ENCODE measurements at regions of chr20 and their contacts with region 1.

Region 1: DNA sequence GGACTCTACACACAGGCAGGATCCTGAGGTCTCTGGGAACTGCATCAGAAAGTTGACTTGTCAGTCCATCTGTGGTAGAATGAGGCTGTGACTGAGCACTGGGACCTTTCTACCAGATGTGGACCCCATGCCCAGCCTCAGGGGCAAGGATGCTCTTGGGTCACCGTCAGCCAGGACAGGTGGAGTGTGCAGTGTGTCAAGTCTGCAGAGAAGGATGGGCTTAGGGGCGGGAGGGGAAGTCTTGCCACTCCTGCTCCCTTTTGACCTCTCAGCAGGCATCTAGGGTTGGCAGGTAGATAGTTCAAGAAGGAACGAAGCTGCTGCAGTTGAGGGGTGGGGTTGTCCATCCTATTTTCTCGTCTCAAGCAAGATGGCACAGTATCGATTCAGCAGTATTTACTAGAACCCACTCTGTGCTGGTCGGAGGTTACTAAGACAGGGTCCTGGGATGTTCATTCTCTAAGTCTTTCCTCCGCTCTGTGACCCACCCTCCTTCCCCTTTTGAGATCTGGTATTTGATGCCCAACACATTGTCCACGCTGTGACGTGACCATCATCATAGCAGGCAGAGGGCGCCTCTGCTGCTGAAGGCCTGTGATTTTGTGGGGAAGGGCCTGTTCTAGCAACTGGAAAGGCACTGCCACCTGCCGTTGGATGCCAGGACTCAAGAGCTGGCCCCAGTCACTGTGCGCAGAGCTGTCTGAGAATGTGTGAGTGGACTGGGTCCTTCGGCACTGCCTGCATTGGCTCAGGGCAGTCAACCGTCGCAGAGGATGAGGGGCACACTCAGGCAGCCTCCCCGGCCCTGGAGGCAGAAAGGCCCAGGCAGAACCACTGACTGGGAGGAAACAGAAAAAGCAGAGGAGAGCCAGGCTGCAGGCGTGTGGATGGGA is 23.2 kb downstream of the RBCK1 start:
- DNase-seq: peak; percentile 83 to 84
- H3K4me3 ChIP-seq: no peak overlapping the region
- H3K4me3 Mint-ChIP-seq: no peak overlapping the region
- H3K27ac Mint-ChIP-seq: peak overlapping the region; percentile 42
- H3K4me1 ChIP-seq: no peaks in the 10 kb centered on the region
- H3K4me1 Mint-ChIP-seq: no peaks in the 10 kb centered on the region
- H3K27me3 ChIP-seq: no peaks in the 10 kb centered on the region
- H3K27me3 Mint-ChIP-seq: no peaks in the 10 kb centered on the region
- CTCF ChIP-seq: peak; percentile 88 to 90

Region 2: GRCh38 chr20:354298-355064 is 76.8 kb before region 1 on chr20:
- CTCF ChIA-PET with region 1: interaction called, 47 read pairs
- POLR2A ChIA-PET with region 1: no interaction called
- intact Hi-C with region 1: loop called (anchors 1 kb)
- DNase-seq: peak; percentile 82 to 89
- H3K4me3 ChIP-seq: no peak overlapping the region
- H3K4me3 Mint-ChIP-seq: no peak overlapping the region
- H3K27ac Mint-ChIP-seq: peak overlapping the region; percentile 63
- H3K4me1 ChIP-seq: peaks cover 26% of the 10 kb centered on the region
- H3K4me1 Mint-ChIP-seq: peaks cover 23% of the 10 kb centered on the region
- H3K27me3 ChIP-seq: no peaks in the 10 kb centered on the region
- H3K27me3 Mint-ChIP-seq: no peaks in the 10 kb centered on the region
- CTCF ChIP-seq: peak; percentile 95 to 97

Region 3: DNA sequence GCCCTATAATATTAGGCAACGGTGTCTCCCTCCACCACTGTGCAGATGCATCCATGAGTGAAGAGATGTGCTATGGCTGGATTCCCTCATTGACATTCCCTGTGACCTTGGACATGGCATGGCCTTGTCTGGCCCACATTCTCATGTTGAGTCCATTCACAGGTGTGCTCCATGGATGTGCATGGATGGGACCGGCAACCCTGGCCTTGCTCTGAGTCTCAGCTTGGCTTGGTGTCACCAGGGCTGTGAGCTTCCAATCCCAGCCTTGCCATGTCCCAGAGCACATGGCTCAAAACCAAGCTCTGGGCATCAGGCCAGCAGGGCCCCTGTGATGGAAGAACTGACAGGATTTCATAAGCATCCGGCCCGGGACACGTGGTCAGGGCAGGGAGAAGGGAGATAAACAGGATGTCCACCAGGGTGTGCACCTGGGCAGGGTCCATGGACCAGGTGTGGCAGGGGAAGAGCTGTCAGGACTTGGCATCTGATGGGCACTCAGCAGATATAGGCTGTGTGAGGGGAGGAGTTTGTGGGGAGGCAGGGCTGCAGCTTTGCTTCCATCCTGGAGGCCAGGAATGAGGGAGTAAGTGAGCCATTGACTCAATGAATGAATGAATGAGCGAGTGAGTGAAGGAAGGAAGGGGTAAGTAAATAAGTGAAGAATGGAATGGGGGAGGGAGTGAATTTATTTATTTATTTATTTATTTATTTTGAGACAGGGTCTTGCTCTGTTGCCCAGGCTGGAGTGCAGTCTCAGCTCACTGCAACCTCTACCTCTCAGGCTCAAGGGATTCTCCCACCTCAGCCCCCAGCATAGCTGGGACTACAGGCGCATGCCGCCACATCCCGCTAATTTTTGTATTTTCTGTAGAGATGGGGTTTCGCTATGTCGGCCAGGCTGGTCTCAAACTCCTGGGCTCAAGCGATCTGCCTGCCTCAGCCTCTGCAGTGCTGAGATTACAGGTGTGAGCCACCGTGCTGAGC is 68.7 kb before region 1 on chr20:
- CTCF ChIA-PET with region 1: interaction called, 13 read pairs
- POLR2A ChIA-PET with region 1: no interaction called
- intact Hi-C with region 1: no loop called
- DNase-seq: peak; percentile 68 to 74
- H3K4me3 ChIP-seq: no peak overlapping the region
- H3K4me3 Mint-ChIP-seq: no peak overlapping the region
- H3K27ac Mint-ChIP-seq: peak overlapping the region; percentile 49
- H3K4me1 ChIP-seq: peaks cover 66% of the 10 kb centered on the region
- H3K4me1 Mint-ChIP-seq: peaks cover 73% of the 10 kb centered on the region
- H3K27me3 ChIP-seq: no peaks in the 10 kb centered on the region
- H3K27me3 Mint-ChIP-seq: no peaks in the 10 kb centered on the region
- CTCF ChIP-seq: peak in 1 of 2 experiments; percentile 41

Region 4: GRCh38 chr20:407133-407952 is 23.9 kb before region 1 on chr20:
- CTCF ChIA-PET with region 1: interaction called, 13 read pairs
- POLR2A ChIA-PET with region 1: interaction called, 3 read pairs
- intact Hi-C with region 1: loop called (anchors 1 kb)
- DNase-seq: peak; percentile 89 to 90
- H3K4me3 ChIP-seq: peak overlapping the region; percentile 45
- H3K4me3 Mint-ChIP-seq: peak overlapping the region; percentile 77
- H3K27ac Mint-ChIP-seq: peak overlapping the region; percentile 83
- H3K4me1 ChIP-seq: peaks cover 24% of the 10 kb centered on the region
- H3K4me1 Mint-ChIP-seq: peaks cover 22% of the 10 kb centered on the region
- H3K27me3 ChIP-seq: no peaks in the 10 kb centered on the region
- H3K27me3 Mint-ChIP-seq: no peaks in the 10 kb centered on the region
- CTCF ChIP-seq: peak; percentile 20 to 43

Region 5: DNA sequence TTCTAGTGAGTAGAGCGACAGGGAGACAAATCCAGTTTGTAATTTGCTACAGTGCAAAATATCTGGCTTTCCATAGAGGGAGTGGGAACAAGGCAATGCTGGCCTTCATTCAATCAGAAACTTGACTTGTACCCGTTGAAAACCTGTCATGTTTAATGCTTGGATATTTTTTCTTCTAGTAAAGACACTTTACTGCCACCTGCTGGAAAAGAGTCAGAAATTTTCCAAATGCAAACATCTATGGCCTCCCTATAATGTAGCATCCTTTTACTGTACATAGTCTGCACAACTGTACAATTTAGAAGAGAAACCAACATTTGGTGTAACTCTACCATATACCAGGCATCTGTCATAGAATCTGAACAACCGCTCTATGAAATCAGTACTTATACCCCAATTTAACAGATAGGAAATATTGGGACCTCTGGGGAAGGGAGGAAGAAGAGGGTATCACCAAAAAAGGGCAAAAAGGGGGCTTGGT is 47.7 kb after region 1 on chr20:
- CTCF ChIA-PET with region 1: interaction called, 5 read pairs
- POLR2A ChIA-PET with region 1: no interaction called
- intact Hi-C with region 1: loop called (anchors 1 kb)
- DNase-seq: peak in 1 of 2 experiments; percentile 59
- H3K4me3 ChIP-seq: no peak overlapping the region
- H3K4me3 Mint-ChIP-seq: no peak overlapping the region
- H3K27ac Mint-ChIP-seq: no peak overlapping the region
- H3K4me1 ChIP-seq: no peaks in the 10 kb centered on the region
- H3K4me1 Mint-ChIP-seq: peaks cover 9% of the 10 kb centered on the region
- H3K27me3 ChIP-seq: no peaks in the 10 kb centered on the region
- H3K27me3 Mint-ChIP-seq: no peaks in the 10 kb centered on the region
- CTCF ChIP-seq: peak; percentile 45 to 48

Region 6: GRCh38 chr20:740141-740540 is 308.9 kb after region 1 on chr20:
- CTCF ChIA-PET with region 1: interaction called, 5 read pairs
- POLR2A ChIA-PET with region 1: no interaction called
- intact Hi-C with region 1: loop called (anchors 2 kb)
- DNase-seq: peak in 1 of 2 experiments; percentile 24
- H3K4me3 ChIP-seq: no peak overlapping the region
- H3K4me3 Mint-ChIP-seq: no peak overlapping the region
- H3K27ac Mint-ChIP-seq: no peak overlapping the region
- H3K4me1 ChIP-seq: no peaks in the 10 kb centered on the region; the same call in 1 of the 2 replicates
- H3K4me1 Mint-ChIP-seq: peaks cover 5% of the 10 kb centered on the region
- H3K27me3 ChIP-seq: no peaks in the 10 kb centered on the region
- H3K27me3 Mint-ChIP-seq: no peaks in the 10 kb centered on the region
- CTCF ChIP-seq: no peak

Measured in Caco-2 (cell line).